ENCODE measurements at regions of chr22 and their contacts with region 1.

Region 1: DNA sequence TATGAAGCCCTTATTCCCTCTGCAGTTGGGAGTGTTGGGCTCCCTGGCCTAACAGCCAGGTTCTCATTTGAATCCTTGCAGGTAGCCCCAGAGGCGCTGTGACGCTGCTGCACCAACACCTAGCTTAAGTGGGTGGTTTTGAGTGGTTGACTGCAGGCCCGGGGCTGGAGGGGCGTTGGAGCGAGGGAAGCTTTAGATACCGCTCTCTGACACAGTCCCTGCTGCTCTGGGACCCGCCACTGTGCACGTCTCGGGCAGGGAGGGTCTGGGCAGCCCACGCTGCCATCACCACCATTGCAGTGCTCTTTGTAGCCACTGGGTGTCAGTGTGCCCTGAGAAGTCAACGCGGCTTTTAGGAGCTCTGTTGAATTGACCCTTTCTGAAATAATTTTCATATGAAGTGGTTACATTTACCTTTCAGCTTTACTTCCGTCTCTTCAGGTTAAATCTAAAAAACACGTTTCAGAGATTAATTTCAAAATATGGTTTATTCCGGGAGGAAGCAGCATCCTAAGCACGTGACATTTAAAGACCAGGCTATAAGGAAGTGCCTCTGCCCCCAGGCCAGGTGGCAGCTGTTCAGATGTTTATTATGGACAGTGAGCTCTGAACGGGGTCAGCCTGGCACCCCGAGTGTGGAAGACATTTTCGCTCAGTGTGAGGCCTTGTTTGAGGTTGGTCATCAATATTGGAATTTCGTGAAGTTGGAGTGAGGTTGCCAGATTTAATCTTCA is 30.9 kb upstream of the PARVB start:
- DNase-seq: peak; percentile 14 to 60 (median 52)
- ATAC-seq: peak; percentile 84
- H3K4me3 ChIP-seq: no peak overlapping the region
- H3K4me3 Mint-ChIP-seq: peak overlapping the region in 2 of 10 donors; percentile 42 to 54
- H3K27ac ChIP-seq: no peak overlapping the region
- H3K27ac Mint-ChIP-seq: peak overlapping the region in 7 of 9 donors; percentile 22 to 93 (median 68)
- H3K4me1 ChIP-seq: peaks cover 0 to 6% of the 10 kb centered on the region in 2 donors
- H3K4me1 Mint-ChIP-seq: peaks cover 26 to 42% (median 33%) of the 10 kb centered on the region in 7 donors
- H3K27me3 ChIP-seq: no peaks in the 10 kb centered on the region
- H3K27me3 Mint-ChIP-seq: no peaks in the 10 kb centered on the region

Region 2: GRCh38 chr22:43833286-43834240 is 159.6 kb before region 1 on chr22:
- CTCF ChIA-PET with region 1: no interaction called
- POLR2A ChIA-PET with region 1: no interaction called
- intact Hi-C with region 1: no loop called
- DNase-seq: no peak
- ATAC-seq: no peak
- H3K4me3 ChIP-seq: no peak overlapping the region
- H3K4me3 Mint-ChIP-seq: no peak overlapping the region
- H3K27ac ChIP-seq: no peak overlapping the region
- H3K27ac Mint-ChIP-seq: no peak overlapping the region
- H3K4me1 ChIP-seq: no peaks in the 10 kb centered on the region
- H3K4me1 Mint-ChIP-seq: peaks cover 0 to 2% (median 0%) of the 10 kb centered on the region in 7 donors
- H3K27me3 ChIP-seq: no peaks in the 10 kb centered on the region
- H3K27me3 Mint-ChIP-seq: peaks cover 0 to 10% (median 7%) of the 10 kb centered on the region in 5 donors

Region 3: DNA sequence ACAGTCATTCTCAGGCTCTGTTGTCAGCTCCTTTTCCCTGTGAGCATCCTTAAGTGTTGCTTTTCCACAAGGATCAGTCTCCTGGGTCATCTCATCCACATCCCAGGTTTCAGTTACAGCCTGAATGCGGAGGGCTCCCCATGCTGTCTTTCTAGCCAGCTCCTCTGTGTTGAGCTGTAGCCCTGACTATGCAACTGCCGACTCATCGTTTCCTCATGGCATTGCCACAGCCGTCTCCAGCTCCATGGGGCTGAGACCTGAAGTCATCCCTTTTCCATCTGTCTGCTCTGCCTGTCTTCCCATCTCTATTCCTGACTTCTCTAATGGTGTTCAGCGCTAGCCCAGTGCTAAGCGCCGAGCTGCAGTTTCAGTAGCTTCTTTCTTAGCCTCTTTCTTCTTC is 26.1 kb before region 1 on chr22:
- CTCF ChIA-PET with region 1: no interaction called
- POLR2A ChIA-PET with region 1: no interaction called
- intact Hi-C with region 1: no loop called
- DNase-seq: no peak
- ATAC-seq: no peak
- H3K4me3 ChIP-seq: no peak overlapping the region
- H3K4me3 Mint-ChIP-seq: no peak overlapping the region
- H3K27ac ChIP-seq: no peak overlapping the region
- H3K27ac Mint-ChIP-seq: no peak overlapping the region
- H3K4me1 ChIP-seq: no peaks in the 10 kb centered on the region
- H3K4me1 Mint-ChIP-seq: peaks cover 0 to 8% (median 4%) of the 10 kb centered on the region in 7 donors
- H3K27me3 ChIP-seq: no peaks in the 10 kb centered on the region
- H3K27me3 Mint-ChIP-seq: no peaks in the 10 kb centered on the region

Region 4: DNA sequence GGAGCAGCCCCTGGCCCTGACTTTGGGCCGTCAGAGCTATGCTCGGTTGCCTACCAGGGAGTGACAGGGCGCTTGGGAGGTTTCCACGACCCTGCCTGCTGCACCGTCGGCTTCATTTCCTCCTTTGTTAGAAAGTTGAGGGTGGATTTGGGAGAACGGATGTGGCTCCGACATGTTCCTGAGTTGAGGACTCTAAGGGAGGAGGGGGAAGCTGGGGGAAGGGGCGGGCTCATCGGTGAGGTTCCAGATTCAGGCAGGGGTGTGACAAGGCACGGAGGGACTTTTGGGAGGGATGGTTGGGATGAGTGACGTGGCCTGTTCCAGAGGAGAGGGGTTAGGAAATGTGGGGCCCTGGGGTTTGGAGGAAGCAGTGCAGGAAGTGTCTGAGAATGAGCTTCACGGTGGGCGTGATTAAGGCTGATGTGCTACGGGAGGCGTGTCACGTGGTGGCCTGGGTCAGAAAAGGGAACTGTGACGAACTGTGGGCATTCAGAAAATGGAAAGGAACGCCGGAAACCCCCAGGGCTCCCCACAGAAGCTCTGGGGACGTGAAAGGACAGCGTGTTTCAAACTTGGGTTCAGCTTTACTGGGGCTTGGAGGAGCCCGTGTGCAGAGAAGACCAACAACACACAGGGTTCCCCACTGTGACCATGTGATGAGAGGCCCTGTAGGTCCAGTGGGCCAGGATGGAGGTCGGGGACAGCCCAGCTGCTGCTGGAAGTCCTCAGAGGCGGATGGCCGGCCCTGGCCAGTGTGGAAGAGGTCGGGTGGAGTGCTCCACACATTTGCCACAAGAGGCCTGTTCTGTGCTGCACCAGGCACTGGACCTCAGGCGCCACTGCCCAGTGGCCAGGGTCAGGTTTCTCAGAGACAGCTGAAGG is 33.7 kb after region 1 on chr22:
- CTCF ChIA-PET with region 1: no interaction called
- POLR2A ChIA-PET with region 1: interaction called, 4 read pairs
- intact Hi-C with region 1: loop called in 1 of 2 experiments (anchors 2 kb)
- DNase-seq: peak in 6 of 9 donors; percentile 19 to 73 (median 34)
- ATAC-seq: peak; percentile 86
- H3K4me3 ChIP-seq: peak overlapping the region; percentile 54
- H3K4me3 Mint-ChIP-seq: peak overlapping the region; percentile 45 to 89 (median 76)
- H3K27ac ChIP-seq: peak overlapping the region; percentile 63
- H3K27ac Mint-ChIP-seq: peak overlapping the region in 7 of 9 donors; percentile 55 to 97 (median 78)
- H3K4me1 ChIP-seq: peaks cover 15 to 24% of the 10 kb centered on the region in 2 donors
- H3K4me1 Mint-ChIP-seq: peaks cover 28 to 68% (median 40%) of the 10 kb centered on the region in 7 donors
- H3K27me3 ChIP-seq: no peaks in the 10 kb centered on the region
- H3K27me3 Mint-ChIP-seq: peaks cover 0 to 32% (median 27%) of the 10 kb centered on the region in 5 donors

Region 5: GRCh38 chr22:44042249-44043218 is 49.3 kb after region 1 on chr22:
- CTCF ChIA-PET with region 1: no interaction called
- POLR2A ChIA-PET with region 1: no interaction called
- intact Hi-C with region 1: no loop called
- DNase-seq: no peak
- ATAC-seq: peak; percentile 38
- H3K4me3 ChIP-seq: no peak overlapping the region
- H3K4me3 Mint-ChIP-seq: peak overlapping the region in 3 of 10 donors; percentile 14 to 28 (median 15)
- H3K27ac ChIP-seq: no peak overlapping the region
- H3K27ac Mint-ChIP-seq: peak overlapping the region in 4 of 9 donors; percentile 2 to 68 (median 39)
- H3K4me1 ChIP-seq: no peaks in the 10 kb centered on the region
- H3K4me1 Mint-ChIP-seq: peaks cover 0 to 44% (median 8%) of the 10 kb centered on the region in 7 donors
- H3K27me3 ChIP-seq: no peaks in the 10 kb centered on the region
- H3K27me3 Mint-ChIP-seq: peaks cover 0 to 7% (median 5%) of the 10 kb centered on the region in 5 donors

Region 6: DNA sequence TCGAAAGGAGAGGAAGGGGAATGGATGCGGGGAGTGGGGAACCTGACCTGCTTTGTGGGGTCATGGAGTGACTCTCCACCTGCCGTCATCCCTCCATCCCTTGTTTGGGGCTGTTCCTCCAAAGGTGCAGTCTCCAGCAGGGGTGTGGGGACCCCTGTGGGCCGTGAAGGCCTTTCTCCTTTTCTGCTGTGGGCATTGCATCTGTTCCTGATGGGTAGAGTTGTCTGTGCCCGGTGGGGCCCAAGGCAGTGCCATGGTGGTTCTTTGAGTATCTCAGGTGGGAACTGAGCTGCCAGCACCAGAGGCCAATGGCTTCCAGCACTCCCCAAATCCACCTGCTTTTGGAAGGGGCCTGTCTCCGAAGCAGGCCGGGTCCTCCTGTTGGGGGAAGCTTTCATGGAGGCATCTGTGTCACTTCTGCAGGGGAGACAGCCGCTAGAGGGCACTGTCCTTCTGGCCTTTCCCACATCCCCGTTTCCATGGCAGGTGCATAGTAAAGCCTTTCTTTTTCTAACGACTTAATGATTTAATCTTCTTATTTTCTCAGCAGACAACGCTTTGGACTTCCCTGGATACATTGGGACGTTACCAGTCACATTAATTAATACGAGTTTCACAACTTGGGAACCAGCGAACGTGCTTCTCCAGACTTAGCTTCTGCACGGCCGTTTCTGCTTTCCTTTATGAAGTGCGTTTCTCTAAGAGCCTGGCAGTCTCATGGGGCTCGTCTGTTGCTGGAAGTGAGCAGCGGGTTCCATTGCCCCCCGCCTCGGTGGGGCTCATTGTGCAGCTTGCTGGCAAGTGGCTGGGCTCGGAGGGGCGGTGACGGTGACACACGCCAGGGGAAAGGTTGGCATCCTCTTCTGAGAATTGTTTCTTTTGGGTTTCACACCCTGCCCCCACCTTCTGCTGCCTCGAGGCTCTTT is 88.0 kb after region 1 on chr22:
- CTCF ChIA-PET with region 1: interaction called, 25 read pairs
- POLR2A ChIA-PET with region 1: interaction called, 4 read pairs
- intact Hi-C with region 1: loop called in 1 of 2 experiments (anchors 1 kb)
- DNase-seq: peak; percentile 15 to 58 (median 50)
- ATAC-seq: peak; percentile 72
- H3K4me3 ChIP-seq: no peak overlapping the region
- H3K4me3 Mint-ChIP-seq: no peak overlapping the region
- H3K27ac ChIP-seq: no peak overlapping the region
- H3K27ac Mint-ChIP-seq: no peak overlapping the region
- H3K4me1 ChIP-seq: no peaks in the 10 kb centered on the region
- H3K4me1 Mint-ChIP-seq: no peaks in the 10 kb centered on the region
- H3K27me3 ChIP-seq: no peaks in the 10 kb centered on the region
- H3K27me3 Mint-ChIP-seq: no peaks in the 10 kb centered on the region

Region 7: DNA sequence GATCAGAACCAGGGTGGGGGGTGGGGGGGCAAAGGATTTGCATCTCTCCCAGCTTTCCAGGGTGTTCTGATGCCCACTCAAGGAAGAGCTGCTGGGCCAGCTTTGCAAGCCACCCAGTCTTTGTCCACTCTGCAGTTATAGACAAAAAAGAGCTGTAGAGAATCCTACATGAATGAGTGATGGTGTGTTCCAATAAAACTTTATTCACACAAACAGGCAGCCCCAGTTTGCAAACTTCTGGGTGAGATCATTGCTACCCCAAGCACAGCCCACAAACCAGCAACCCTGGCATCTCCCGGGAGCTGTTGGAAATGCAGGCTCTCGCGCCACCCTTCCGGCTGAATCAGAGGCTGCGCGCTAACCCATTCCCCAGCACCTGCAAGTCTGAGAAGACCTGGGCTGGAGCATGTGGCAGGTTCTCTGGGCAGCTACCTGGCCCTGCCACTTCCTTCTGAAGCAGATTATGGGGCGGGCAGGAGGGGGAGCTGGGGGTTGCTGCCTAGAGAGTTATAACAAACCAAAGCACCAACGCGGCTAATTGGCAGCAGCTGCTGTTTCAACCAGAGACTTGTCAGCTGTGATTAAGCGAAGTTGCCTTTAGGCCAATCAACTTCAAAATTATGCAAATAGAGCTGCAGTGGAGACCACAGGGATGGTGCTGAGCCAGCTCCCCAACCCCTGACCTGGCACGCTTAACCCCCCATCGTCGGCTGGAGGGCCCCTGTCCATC is 323.4 kb after region 1 on chr22:
- CTCF ChIA-PET with region 1: no interaction called
- POLR2A ChIA-PET with region 1: no interaction called
- intact Hi-C with region 1: no loop called
- DNase-seq: no peak
- ATAC-seq: no peak
- H3K4me3 ChIP-seq: no peak overlapping the region
- H3K4me3 Mint-ChIP-seq: no peak overlapping the region
- H3K27ac ChIP-seq: no peak overlapping the region
- H3K27ac Mint-ChIP-seq: no peak overlapping the region
- H3K4me1 ChIP-seq: peaks cover 0 to 8% of the 10 kb centered on the region in 2 donors
- H3K4me1 Mint-ChIP-seq: peaks cover 0 to 10% (median 5%) of the 10 kb centered on the region in 7 donors
- H3K27me3 ChIP-seq: no peaks in the 10 kb centered on the region
- H3K27me3 Mint-ChIP-seq: no peaks in the 10 kb centered on the region

Region 8: GRCh38 chr22:44567846-44568493 is 574.8 kb after region 1 on chr22:
- CTCF ChIA-PET with region 1: interaction called, 12 read pairs
- POLR2A ChIA-PET with region 1: interaction called, 3 read pairs
- intact Hi-C with region 1: loop called in 1 of 2 experiments (anchors 2 kb)
- DNase-seq: peak in 6 of 9 donors; percentile 4 to 25 (median 20)
- ATAC-seq: no peak
- H3K4me3 ChIP-seq: no peak overlapping the region
- H3K4me3 Mint-ChIP-seq: no peak overlapping the region
- H3K27ac ChIP-seq: no peak overlapping the region
- H3K27ac Mint-ChIP-seq: no peak overlapping the region
- H3K4me1 ChIP-seq: no peaks in the 10 kb centered on the region
- H3K4me1 Mint-ChIP-seq: peaks cover 0 to 4% (median 0%) of the 10 kb centered on the region in 7 donors
- H3K27me3 ChIP-seq: no peaks in the 10 kb centered on the region
- H3K27me3 Mint-ChIP-seq: peaks cover 0 to 13% (median 0%) of the 10 kb centered on the region in 5 donors